Mammary epithelial cell (primary cell): ENCODE measurements at regions of chr11 and their contacts with region 1.

Region 1: DNA sequence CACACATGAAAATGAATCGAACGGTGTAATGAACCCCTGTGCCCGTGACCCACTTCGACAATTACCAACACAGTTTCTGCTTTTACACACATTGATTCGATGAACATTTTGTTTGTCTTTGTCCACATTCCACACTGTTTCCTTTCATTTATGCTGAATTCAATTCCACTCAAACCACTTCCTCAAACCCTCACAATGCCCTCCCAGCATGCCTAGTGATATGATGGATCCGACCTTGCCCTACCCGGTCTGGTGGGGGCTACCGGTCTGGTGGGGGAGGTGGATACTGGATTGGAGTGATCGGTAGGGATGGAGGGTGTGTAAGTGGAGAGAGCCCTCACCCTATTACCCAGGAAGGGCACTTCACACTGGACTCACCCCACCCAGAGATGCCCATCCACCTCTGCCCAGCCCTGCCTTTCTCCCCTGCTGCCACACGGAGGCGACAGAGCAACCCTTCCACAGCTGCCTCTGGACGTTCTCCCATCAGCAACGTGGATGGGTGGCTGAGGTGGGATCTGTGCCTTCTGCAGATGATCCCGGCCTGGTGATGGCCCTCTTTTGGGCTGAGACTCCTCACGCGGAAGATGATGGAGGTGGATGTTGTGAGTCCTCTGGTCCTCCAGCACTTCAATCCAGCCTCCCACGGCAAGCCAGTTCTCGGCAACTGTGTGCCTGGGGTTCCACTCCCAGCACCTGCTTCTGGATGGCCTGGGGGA is 33.0 kb upstream of the P2RY2 start:
- DNase-seq: peak; percentile 77
- H3K4me3 ChIP-seq: peak overlapping the region in 1 of 3 experiments; percentile 3
- H3K27ac ChIP-seq: peak overlapping the region; percentile 60
- H3K4me1 ChIP-seq: peaks cover 38% of the 10 kb centered on the region
- H3K27me3 ChIP-seq: no peaks in the 10 kb centered on the region
- CTCF ChIP-seq: peak; percentile 99 to 100

Region 2: DNA sequence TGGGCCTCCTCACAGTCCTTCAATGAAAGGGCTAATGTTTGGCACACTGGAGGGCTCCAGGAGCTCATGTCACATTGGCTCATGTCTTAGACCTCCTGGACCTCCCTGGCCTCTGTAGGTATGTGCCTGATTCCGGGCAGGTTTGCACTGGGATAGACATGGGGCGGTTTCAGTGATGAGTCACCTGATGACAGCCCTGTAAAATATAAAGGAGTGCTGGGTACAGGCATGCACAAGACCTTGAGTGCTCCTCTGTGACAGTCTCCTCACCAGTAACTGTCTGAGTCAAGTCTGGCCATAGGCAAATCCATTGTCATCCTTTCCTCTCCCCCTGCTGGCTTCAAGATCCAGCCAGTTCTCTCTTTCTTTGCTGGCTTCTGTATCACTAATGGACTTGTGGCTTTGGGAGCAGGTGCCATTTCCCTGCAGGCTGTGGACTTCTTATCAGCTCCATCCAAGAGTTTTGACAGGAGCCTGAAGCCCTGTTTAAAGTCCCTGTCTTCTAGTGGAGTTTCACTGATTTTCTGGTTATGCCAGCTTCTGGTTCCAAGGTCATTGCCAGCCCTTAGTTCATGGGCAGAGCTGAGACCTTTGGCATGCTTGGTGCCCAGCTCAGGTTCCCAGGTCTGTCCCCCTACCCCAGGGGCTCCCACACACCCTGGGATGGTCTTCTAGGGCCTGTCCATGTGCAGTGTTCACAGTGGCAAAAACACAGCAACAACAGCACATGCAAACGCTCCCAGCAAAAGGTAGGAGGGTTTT is 10.3 kb after region 1 on chr11:
- CTCF ChIA-PET with region 1: interaction called, 3 read pairs
- dilution Hi-C with region 1: no loop called
- in situ Hi-C with region 1: no loop called
- intact Hi-C with region 1: loop called (anchors 1 kb)
- DNase-seq: peak; percentile 98
- H3K4me3 ChIP-seq: no peak overlapping the region
- H3K27ac ChIP-seq: peak overlapping the region; percentile 69
- H3K4me1 ChIP-seq: peaks cover 67% of the 10 kb centered on the region
- H3K27me3 ChIP-seq: no peaks in the 10 kb centered on the region
- CTCF ChIP-seq: peak in 1 of 2 donors; percentile 51

Region 3: DNA sequence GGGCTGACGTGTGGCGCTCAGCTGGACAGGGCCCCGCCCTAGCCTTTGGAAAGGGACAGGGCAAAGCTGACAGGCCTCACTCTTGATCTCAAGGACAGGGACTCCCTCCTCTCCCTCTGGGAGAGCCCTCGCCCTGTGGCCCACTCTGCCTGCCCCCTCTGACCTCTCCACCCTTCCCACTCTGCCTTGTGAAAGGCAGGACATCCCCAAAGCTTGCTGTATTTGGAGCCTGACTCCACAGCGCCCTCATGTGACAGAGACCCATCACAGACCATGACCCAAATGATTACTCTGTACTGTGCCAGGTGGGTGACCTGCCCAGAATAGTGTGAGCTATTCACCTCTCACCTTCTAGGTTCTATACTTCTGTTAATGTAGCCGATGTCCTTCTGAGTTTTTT is 51.7 kb after region 1 on chr11:
- CTCF ChIA-PET with region 1: interaction called, 18 read pairs
- dilution Hi-C with region 1: no loop called
- in situ Hi-C with region 1: loop called (anchors 5 kb)
- intact Hi-C with region 1: loop called (anchors 1 kb)
- DNase-seq: peak; percentile 48
- H3K4me3 ChIP-seq: no peak overlapping the region
- H3K27ac ChIP-seq: no peak overlapping the region
- H3K4me1 ChIP-seq: peaks cover 43% of the 10 kb centered on the region
- H3K27me3 ChIP-seq: no peaks in the 10 kb centered on the region
- CTCF ChIP-seq: peak; percentile 83 to 85

Region 4: GRCh38 chr11:73288873-73289707 is 104.0 kb after region 1 on chr11:
- CTCF ChIA-PET with region 1: interaction called, 6 read pairs
- dilution Hi-C with region 1: no loop called
- in situ Hi-C with region 1: loop called (anchors 5 kb)
- intact Hi-C with region 1: loop called (anchors 1 kb)
- DNase-seq: peak; percentile 87
- H3K4me3 ChIP-seq: no peak overlapping the region
- H3K27ac ChIP-seq: peak overlapping the region; percentile 30
- H3K4me1 ChIP-seq: peaks cover 15% of the 10 kb centered on the region
- H3K27me3 ChIP-seq: no peaks in the 10 kb centered on the region
- CTCF ChIP-seq: peak; percentile 81 to 98

Region 5: DNA sequence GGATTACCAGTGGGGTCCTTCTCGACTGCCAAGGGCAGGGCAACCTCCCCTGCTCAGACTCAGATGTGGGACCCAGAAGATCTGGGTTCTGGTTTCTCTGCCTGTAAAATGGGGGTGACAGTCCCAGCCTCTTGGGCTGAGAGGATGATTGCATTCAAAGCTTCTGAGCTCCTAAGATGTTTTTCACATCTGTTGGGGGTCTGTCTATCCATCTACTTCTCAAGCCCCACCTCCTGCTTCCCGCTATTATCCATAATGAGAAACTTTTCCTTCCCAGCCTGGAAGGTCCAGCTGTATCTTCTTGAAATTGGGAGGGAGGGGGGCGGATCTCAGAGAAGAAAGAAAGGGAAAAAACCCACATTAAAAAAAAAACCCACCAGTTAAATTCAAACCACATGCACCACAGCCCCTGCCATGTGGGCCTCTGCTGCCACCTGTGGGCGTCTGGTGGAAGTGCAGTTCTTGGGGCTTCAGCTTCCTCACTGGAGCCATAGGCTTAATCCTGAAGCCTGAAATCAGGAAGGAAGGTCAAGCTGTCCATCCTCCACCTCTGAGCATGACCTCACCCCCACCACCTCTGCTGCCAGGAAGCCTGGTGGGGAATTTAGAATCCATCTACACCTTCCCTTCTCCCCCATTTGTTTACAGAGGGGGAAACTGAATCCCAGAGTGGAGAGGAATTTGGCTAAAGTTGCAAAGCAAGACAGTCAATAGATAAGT is 150.3 kb after region 1 on chr11:
- CTCF ChIA-PET with region 1: interaction called, 5 read pairs
- dilution Hi-C with region 1: no loop called
- in situ Hi-C with region 1: no loop called
- intact Hi-C with region 1: loop called (anchors 2 kb)
- DNase-seq: peak; percentile 55
- H3K4me3 ChIP-seq: no peak overlapping the region
- H3K27ac ChIP-seq: no peak overlapping the region
- H3K4me1 ChIP-seq: peaks cover 17% of the 10 kb centered on the region
- H3K27me3 ChIP-seq: no peaks in the 10 kb centered on the region
- CTCF ChIP-seq: peak; percentile 98 to 99

Region 6: GRCh38 chr11:74683279-74683871 is 1498.3 kb after region 1 on chr11:
- CTCF ChIA-PET with region 1: no interaction called
- dilution Hi-C with region 1: no loop called
- in situ Hi-C with region 1: no loop called
- intact Hi-C with region 1: no loop called
- DNase-seq: no peak
- H3K4me3 ChIP-seq: peak overlapping the region; percentile 7 to 28 (median 9)
- H3K27ac ChIP-seq: no peak overlapping the region
- H3K4me1 ChIP-seq: peaks cover 6% of the 10 kb centered on the region
- H3K27me3 ChIP-seq: no peaks in the 10 kb centered on the region
- CTCF ChIP-seq: peak; percentile 11 to 49